ENCODE measurements at regions of chrX and their contacts with region 1.

Region 1: GRCh38 chrX:24693453-24694202 is at the start of gene POLA1:
- DNase-seq: peak; percentile 81 to 93
- ATAC-seq: peak; percentile 97
- H3K4me3 ChIP-seq: peak within 1 kb of the TSS; percentile 64 to 72 (median 70)
- H3K27ac ChIP-seq: peak within 1 kb of the TSS; percentile 77 to 91 (median 88)
- H3K4me1 ChIP-seq: peaks cover 7 to 19% of the 10 kb centered on the region in 2 donors
- H3K27me3 ChIP-seq: no peaks in the 10 kb centered on the region
- CTCF ChIP-seq: peak in 1 of 5 experiments; percentile 4
- POLR2A ChIP-seq: peak in 1 of 2 donors; percentile 15
- total RNA-seq, gene POLA1: 5.2 to 9.6 (median 6.9) TPM

Region 2: GRCh38 chrX:24395775-24396174 is 297.9 kb before region 1 on chrX:
- in situ Hi-C with region 1: no loop called
- intact Hi-C with region 1: loop called (anchors 10 kb)
- DNase-seq: peak in 1 of 2 donors; percentile 16
- ATAC-seq: peak; percentile 81 to 94
- H3K4me3 ChIP-seq: no peak overlapping the region
- H3K27ac ChIP-seq: peak overlapping the region in 1 of 4 donors; percentile 5
- H3K4me1 ChIP-seq: no peaks in the 10 kb centered on the region
- H3K27me3 ChIP-seq: no peaks in the 10 kb centered on the region
- CTCF ChIP-seq: peak; percentile 57 to 71 (median 65)
- POLR2A ChIP-seq: no peak

Region 3: GRCh38 chrX:24479924-24480323 is 213.7 kb before region 1 on chrX:
- in situ Hi-C with region 1: no loop called
- intact Hi-C with region 1: loop called (anchors 10 kb)
- DNase-seq: peak in 1 of 2 donors; percentile 14
- ATAC-seq: no peak
- H3K4me3 ChIP-seq: no peak overlapping the region
- H3K27ac ChIP-seq: no peak overlapping the region
- H3K4me1 ChIP-seq: no peaks in the 10 kb centered on the region
- H3K27me3 ChIP-seq: no peaks in the 10 kb centered on the region
- CTCF ChIP-seq: no peak
- POLR2A ChIP-seq: no peak

Region 4: DNA sequence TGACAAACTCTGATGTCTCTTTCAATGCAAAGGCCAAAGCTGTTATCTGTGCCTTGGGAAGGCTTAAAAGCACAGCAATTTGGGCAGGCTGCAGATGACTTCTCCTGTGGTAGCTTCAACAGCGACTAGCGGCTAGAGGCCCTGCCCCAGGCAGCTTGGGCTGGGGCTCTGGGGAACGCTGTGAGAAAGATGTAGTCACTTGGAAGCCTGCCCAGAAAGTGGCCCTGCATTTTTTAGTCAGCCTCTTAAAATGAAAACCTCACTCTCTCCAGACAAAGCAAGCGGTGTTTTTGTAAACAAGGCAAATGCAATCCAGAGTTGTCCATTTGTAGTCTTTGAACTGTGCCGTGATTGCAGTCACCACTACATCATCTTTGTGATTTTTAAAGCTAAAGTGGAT is 74.0 kb before region 1 on chrX:
- in situ Hi-C with region 1: no loop called
- intact Hi-C with region 1: no loop called
- DNase-seq: no peak
- ATAC-seq: no peak
- H3K4me3 ChIP-seq: no peak overlapping the region
- H3K27ac ChIP-seq: no peak overlapping the region
- H3K4me1 ChIP-seq: no peaks in the 10 kb centered on the region
- H3K27me3 ChIP-seq: no peaks in the 10 kb centered on the region
- CTCF ChIP-seq: no peak
- POLR2A ChIP-seq: no peak

Measured in gastrocnemius medialis (tissue), 4 donors.